ENCODE measurements at regions of chr6 and their contacts with region 1.

Region 1: DNA sequence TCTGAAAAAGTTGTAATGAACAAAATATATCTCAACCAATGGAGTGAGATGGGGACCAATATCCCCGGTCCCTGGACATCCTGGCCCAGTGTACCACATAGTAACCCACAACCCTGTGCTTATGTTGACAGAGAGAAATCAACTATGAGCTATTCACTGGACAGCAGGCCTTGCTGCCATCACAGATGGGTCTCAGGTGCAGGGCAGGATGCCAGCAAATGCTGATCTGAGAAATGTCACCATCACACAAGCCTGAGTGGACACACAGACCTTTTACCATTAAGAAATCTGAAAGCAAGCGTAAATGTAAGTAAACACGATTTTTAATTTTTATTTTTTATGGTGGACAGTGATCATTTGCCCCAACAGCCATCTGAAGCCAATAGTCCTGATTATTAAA is 9.1 kb downstream of the RPP40 start:
- DNase-seq: no peak
- ATAC-seq: no peak
- H3K4me3 ChIP-seq: no peak overlapping the region
- H3K27ac ChIP-seq: no peak overlapping the region
- H3K4me1 ChIP-seq: no peaks in the 10 kb centered on the region
- H3K27me3 ChIP-seq: no peaks in the 10 kb centered on the region
- CTCF ChIP-seq: no peak
- POLR2A ChIP-seq: no peak
- RAD21 ChIP-seq: no peak

Region 2: DNA sequence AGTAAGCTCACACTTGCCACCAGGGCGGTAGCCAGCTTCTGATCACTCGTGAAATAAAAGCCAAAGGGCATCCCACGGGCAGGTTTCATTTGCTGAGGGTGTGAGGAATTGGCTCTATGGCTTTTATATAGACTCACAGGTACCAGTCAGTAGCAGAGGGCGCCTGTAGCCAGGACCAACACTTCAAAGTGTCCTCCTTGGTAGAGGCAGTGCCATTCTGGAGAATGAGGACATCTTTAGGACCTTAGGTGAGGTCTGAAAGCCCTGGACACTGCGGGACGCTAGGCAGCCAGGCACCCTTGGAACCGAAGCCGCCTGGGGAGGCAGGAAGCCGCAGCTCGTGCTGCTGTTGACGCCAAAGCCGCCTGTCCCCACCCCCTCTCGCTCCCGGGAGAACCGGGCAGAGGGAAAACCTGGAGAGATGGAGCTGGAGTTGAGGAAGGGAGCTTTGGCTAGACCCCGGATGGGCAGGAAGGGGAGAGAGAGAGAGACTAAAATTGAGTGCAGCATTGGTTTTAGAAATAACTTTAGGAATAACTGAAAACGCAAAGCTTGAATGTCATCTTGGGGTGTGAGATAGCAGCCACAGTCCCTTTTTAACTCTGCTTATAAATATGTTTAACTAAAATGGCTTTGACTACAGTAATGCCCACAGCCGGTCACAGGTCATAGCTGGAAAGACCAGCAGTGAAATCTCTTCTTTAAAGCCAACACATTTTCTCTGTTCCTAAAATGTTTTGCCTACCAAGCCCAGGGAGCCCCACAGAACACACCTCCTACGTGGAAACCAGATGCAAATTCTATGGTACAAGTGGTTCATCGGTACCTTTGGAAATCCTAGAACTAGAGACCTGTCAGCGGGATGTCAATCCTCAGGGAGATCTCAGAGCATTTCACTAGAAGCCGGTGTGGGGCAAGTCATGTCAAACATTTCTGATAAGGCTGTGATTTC is 347.1 kb before region 1 on chr6:
- CTCF ChIA-PET with region 1: no interaction called
- POLR2A ChIA-PET with region 1: no interaction called
- dilution Hi-C with region 1: no loop called
- in situ Hi-C with region 1: no loop called
- intact Hi-C with region 1: no loop called
- DNase-seq: peak; percentile 84
- ATAC-seq: peak; percentile 99
- H3K4me3 ChIP-seq: peak overlapping the region; percentile 52
- H3K27ac ChIP-seq: peak overlapping the region; percentile 51
- H3K4me1 ChIP-seq: peaks cover 6% of the 10 kb centered on the region
- H3K27me3 ChIP-seq: no peaks in the 10 kb centered on the region
- CTCF ChIP-seq: no peak
- POLR2A ChIP-seq: 0 out of 2 replicates have a peak, but pooled peaks have one; percentile 32
- RAD21 ChIP-seq: peak; percentile 30; the same call in 1 of the 2 replicates

Region 3: GRCh38 chr6:4969609-4970285 is 25.0 kb before region 1 on chr6:
- CTCF ChIA-PET with region 1: interaction called, 3 read pairs
- POLR2A ChIA-PET with region 1: interaction called, 19 read pairs
- dilution Hi-C with region 1: no loop called
- in situ Hi-C with region 1: no loop called
- intact Hi-C with region 1: no loop called
- DNase-seq: no peak
- ATAC-seq: no peak
- H3K4me3 ChIP-seq: no peak overlapping the region
- H3K27ac ChIP-seq: no peak overlapping the region
- H3K4me1 ChIP-seq: peaks cover 14% of the 10 kb centered on the region; the same call in 1 of the 2 replicates
- H3K27me3 ChIP-seq: no peaks in the 10 kb centered on the region
- CTCF ChIP-seq: no peak
- POLR2A ChIP-seq: no peak
- RAD21 ChIP-seq: no peak

Region 4: GRCh38 chr6:5333658-5334057 is 338.9 kb after region 1 on chr6:
- CTCF ChIA-PET with region 1: no interaction called
- POLR2A ChIA-PET with region 1: no interaction called
- dilution Hi-C with region 1: no loop called
- in situ Hi-C with region 1: no loop called
- intact Hi-C with region 1: no loop called
- DNase-seq: peak; percentile 60
- ATAC-seq: peak; percentile 69
- H3K4me3 ChIP-seq: no peak overlapping the region
- H3K27ac ChIP-seq: no peak overlapping the region
- H3K4me1 ChIP-seq: no peaks in the 10 kb centered on the region
- H3K27me3 ChIP-seq: no peaks in the 10 kb centered on the region
- CTCF ChIP-seq: no peak
- POLR2A ChIP-seq: no peak
- RAD21 ChIP-seq: no peak

Measured in IMR-90 (cell line).